Dorsolateral prefrontal cortex (tissue), 120 donors: ENCODE measurements at regions of chr1 and their contacts with region 1.

Region 1: GRCh38 chr1:170698301-170699275 is 34.7 kb downstream of the PRRX1 start:
- DNase-seq: peak in 4 of 10 donors; percentile 31 to 56 (median 40)
- H3K4me3 ChIP-seq: peak overlapping the region in 35 of 59 donors; percentile 1 to 48 (median 19)
- H3K27ac ChIP-seq: peak overlapping the region in 57 of 59 donors; percentile 13 to 91 (median 81)
- H3K27me3 ChIP-seq: no peaks in the 10 kb centered on the region
- CTCF ChIP-seq: no peak

Region 2: DNA sequence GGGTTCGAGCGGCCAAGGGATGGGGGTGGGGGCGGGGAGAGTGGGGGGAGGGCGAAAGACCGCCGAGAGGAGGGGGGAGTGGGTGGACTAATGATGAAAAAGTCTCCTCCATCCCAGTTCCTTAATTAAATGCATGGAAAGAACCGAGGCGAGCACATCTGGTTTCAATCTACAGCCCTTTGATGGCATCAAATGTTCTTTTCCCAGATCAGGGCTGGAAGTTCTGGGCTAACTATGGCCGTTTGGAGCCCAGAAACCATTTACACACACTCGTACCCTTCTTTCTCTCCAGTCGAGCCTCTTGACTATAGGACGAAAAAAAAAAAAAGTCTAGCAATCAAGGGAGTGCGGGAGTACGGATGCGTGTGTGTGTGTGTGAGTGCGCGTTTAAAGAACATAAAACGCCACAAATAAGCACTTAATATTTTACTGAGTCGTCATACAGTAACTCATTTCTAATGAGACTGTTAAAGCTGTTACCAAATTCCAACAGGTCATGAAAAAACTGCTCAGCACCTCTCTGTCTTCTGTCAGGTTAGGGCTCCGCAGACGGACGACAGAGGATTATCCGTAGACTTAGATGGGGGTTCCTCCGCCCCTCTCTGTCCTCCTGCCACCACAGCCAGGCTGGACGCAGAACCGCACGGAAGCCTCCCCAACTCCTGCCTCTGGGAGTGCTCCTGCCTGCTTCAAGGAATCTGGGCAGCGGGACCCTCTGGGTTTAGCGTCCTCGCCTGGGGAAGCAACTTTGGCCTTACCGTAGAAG is 36.8 kb before region 1 on chr1:
- intact Hi-C with region 1: no loop called
- DNase-seq: no peak
- H3K4me3 ChIP-seq: peak overlapping the region; percentile 17 to 81 (median 67)
- H3K27ac ChIP-seq: peak overlapping the region in 27 of 59 donors; percentile 2 to 87 (median 51)
- H3K27me3 ChIP-seq: peaks cover 0 to 66% (median 15%) of the 10 kb centered on the region in 45 donors
- CTCF ChIP-seq: peak in 1 of 56 donors; percentile 8

Region 3: GRCh38 chr1:170881268-170882265 is 183.0 kb after region 1 on chr1:
- intact Hi-C with region 1: loop called (anchors 10 kb)
- DNase-seq: no peak
- H3K4me3 ChIP-seq: peak overlapping the region in 35 of 59 donors; percentile 8 to 50 (median 28)
- H3K27ac ChIP-seq: peak overlapping the region in 12 of 59 donors; percentile 16 to 79 (median 54)
- H3K27me3 ChIP-seq: no peaks in the 10 kb centered on the region
- CTCF ChIP-seq: peak in 55 of 56 donors; percentile 40 to 93 (median 68)